CD8-positive, alpha-beta T cell (primary cell): ENCODE measurements at regions of chr1 and their contacts with region 1.

Region 1: DNA sequence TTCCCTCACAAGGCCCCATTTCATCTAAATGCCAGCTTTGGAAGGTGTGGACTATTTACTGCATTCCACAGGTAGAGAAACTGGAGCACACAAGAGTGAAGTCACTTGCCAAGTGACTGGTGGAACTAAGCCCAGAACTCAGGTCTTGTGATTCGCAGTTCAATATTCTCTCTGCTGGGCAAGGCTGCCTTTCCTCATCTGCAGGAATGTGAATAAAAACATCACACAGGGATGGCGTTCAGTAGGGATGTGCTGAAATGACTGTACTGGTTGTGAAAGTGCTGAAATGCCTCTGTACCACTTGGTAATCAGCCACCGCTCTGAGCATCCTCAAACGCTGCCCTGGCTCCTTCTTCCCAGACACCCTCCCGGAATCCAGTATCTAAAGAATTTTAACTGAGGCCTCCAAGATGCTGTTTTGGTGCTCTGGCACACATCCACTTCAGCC is 145.6 kb downstream of the HIVEP3 start:
- DNase-seq: no peak
- ATAC-seq: no peak
- H3K4me3 ChIP-seq: no peak overlapping the region
- H3K4me3 Mint-ChIP-seq: no peak overlapping the region
- H3K27ac ChIP-seq: no peak overlapping the region
- H3K27ac Mint-ChIP-seq: no peak overlapping the region
- H3K4me1 ChIP-seq: no peaks in the 10 kb centered on the region
- H3K4me1 Mint-ChIP-seq: no peaks in the 10 kb centered on the region
- H3K27me3 ChIP-seq: no peaks in the 10 kb centered on the region
- H3K27me3 Mint-ChIP-seq: no peaks in the 10 kb centered on the region
- CTCF ChIP-seq: no peak

Region 2: DNA sequence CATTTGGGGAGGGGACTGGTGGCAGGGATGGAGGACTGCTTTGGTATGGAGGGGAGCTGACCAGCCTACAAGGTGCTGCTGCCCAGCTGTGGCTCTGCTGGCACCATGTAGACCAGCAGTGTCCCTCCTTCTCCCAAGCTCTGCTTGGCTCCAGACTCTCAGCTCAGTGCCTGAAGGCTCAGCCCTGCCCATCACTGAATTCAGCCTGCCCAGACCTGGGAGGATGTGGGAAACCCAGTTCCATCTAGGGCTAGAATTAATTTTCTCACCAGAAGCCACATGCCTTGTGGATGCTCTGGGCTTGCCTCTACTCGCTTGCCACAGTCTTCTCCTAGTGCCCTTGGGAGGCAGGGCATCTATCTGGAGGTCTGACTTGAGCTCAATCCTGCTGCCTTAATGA is 93.6 kb before region 1 on chr1:
- CTCF ChIA-PET with region 1: no interaction called
- POLR2A ChIA-PET with region 1: no interaction called
- intact Hi-C with region 1: no loop called
- DNase-seq: no peak
- ATAC-seq: no peak
- H3K4me3 ChIP-seq: no peak overlapping the region
- H3K4me3 Mint-ChIP-seq: no peak overlapping the region
- H3K27ac ChIP-seq: no peak overlapping the region
- H3K27ac Mint-ChIP-seq: no peak overlapping the region
- H3K4me1 ChIP-seq: peaks cover 58% of the 10 kb centered on the region
- H3K4me1 Mint-ChIP-seq: peaks cover 54% of the 10 kb centered on the region
- H3K27me3 ChIP-seq: no peaks in the 10 kb centered on the region
- H3K27me3 Mint-ChIP-seq: no peaks in the 10 kb centered on the region
- CTCF ChIP-seq: no peak

Region 3: DNA sequence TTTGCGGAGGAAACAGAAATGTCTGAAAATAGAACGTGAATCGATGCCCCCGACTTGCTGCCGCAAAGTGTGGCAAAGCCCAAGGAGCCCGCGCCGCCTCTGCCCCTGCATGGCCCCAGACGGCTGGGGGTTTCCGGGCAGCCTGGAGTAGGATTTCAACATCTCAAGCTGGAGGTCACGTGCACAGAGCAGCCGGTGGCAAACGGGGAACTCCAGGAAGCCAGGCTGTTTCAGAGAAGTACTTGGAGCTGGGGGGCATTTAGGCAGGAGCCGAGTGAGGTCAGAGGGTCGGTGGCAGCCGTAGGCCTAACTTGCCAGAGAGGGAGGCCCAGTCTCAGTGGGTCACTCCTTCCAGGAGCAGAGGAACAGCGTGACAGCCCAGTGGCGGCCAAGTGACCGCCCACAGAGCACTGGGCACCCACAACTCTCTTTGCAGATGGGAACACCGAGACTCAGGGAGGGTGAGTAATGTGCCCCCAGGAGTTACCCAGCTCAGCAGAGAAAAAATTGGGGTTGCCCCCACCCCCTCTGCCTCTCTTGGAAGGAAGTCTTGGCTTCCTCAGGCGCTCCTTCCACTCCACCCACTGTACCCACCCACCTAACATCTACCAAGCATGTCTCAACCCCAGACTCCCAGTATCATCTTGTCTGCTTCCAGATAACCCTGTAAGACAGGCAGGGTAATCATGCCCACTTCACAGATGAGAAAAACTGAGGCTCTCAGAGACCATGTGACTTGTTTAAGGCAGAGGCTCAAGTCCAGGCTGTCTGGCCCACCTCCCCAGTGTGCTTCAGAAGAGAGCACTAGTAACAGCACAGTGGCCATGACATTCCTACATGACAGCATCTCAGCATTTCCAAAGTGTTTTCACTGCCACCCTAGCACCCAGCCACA is 33.9 kb before region 1 on chr1:
- CTCF ChIA-PET with region 1: no interaction called
- POLR2A ChIA-PET with region 1: no interaction called
- intact Hi-C with region 1: no loop called
- DNase-seq: peak; percentile 30 to 92 (median 61)
- ATAC-seq: peak; percentile 83
- H3K4me3 ChIP-seq: peak overlapping the region in 1 of 2 experiments; percentile 16
- H3K4me3 Mint-ChIP-seq: peak overlapping the region; percentile 68
- H3K27ac ChIP-seq: peak overlapping the region in 1 of 2 experiments; percentile 7
- H3K27ac Mint-ChIP-seq: peak overlapping the region; percentile 80
- H3K4me1 ChIP-seq: peaks cover 30% of the 10 kb centered on the region
- H3K4me1 Mint-ChIP-seq: peaks cover 31% of the 10 kb centered on the region
- H3K27me3 ChIP-seq: no peaks in the 10 kb centered on the region
- H3K27me3 Mint-ChIP-seq: no peaks in the 10 kb centered on the region
- CTCF ChIP-seq: no peak

Region 4: DNA sequence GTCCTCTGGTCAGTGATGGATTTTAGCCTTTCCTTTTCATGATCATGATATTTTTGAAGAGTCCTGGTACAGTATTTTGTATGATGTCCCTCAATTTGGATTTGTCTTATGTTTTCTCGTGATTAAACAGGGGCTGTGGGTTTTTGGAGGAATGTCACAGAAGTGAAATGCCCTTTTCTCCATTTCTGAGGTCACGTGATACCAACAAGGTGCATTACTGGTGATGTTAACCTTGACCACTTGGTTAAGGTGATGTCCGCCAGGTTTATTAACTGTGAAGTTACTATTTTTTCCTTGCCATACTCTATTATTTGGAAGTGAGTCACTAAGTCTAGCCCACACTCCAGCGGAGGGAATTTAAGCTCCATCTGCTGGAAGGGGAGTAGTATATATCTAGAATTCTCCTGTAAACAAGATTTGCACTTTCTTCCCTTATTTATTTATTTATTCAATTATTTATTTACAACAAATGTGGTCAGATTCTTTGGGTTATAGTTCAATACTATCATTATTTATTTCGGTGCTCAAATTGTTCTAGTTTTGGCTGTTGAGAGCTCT is 22.1 kb after region 1 on chr1:
- CTCF ChIA-PET with region 1: no interaction called
- POLR2A ChIA-PET with region 1: no interaction called
- intact Hi-C with region 1: loop called in 1 of 2 experiments (anchors 1 kb)
- DNase-seq: no peak
- ATAC-seq: no peak
- H3K4me3 ChIP-seq: no peak overlapping the region
- H3K4me3 Mint-ChIP-seq: no peak overlapping the region
- H3K27ac ChIP-seq: no peak overlapping the region
- H3K27ac Mint-ChIP-seq: no peak overlapping the region
- H3K4me1 ChIP-seq: peaks cover 33% of the 10 kb centered on the region
- H3K4me1 Mint-ChIP-seq: peaks cover 49% of the 10 kb centered on the region
- H3K27me3 ChIP-seq: no peaks in the 10 kb centered on the region
- H3K27me3 Mint-ChIP-seq: no peaks in the 10 kb centered on the region
- CTCF ChIP-seq: no peak